ENCODE measurements at regions of chr7 and their contacts with region 1.

Region 1: DNA sequence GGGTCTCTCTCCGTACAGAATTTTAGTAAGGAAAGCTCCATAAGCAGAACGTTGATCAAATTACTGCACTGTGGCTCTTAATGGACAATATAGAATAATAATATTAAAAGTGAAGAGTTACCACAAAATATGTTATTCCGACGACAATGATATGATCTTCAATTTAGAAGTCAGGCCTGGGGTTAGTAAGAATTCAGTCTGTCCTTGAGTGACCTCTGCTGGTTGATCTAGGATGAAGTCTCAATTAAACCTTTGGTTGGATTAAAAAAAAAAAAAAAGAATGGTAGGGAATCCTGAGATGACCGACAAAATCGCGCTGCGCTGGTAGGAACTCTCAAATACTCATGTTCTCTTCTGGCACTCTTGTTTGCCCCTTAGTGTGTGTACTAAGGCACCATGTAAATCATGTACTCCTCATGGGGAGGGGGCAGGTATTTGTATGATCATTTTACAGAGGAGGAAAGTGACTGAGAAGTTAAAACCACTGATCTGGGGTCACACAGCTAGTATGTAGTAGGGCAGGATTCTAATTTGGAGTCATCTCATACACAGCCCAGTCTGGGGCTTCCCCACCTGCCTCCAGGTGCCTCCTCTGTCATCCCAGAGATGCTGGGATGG is 161.3 kb upstream of the NPVF start:
- DNase-seq: no peak
- ATAC-seq: no peak

Region 2: GRCh38 chr7:25259587-25260243 is 129.9 kb before region 1 on chr7:
- intact Hi-C with region 1: loop called (anchors 2 kb)
- DNase-seq: peak; percentile 46
- ATAC-seq: peak; percentile 79

Region 3: DNA sequence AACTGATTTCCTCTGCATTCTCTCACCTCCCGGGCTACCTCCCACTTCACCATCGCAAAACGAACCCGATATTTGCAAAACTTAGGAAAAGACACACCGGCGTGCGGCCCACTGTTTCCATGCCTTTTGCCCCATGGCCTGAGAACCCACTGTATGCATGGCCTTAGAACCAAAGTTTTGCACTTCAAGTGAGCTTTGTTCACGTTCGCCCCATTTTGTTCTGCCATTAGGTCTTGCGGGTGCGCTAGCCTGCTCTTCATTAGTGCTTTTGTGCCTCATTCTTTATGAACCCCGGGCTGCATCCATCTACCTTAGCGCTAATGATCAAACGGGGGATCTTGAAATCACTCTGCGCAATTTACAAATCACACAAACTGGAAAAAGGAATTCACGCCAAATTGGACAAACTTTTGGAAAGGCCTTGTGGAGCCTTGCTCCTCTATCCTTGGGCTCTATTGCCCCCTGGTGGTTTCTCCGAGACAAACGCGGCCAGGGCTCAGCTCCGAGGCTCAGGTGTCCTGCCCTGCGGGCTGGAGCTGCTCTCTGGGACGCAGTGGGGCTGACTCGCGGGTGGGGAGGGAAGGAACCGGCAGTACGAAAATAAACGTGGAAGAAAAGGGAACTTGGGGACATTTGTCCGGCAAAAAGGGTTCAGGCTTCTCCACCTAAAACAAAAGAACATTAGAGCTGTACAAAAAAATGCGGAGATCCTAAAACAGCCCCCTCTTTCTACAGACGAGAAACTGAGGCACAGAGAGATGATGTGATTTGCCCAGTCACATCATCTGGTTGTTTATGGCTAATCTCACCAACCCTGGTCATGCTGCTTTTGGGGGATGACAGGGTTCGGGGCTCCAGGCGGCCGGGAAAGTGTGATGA is 462.0 kb after region 1 on chr7:
- intact Hi-C with region 1: loop called (anchors 5 kb)
- DNase-seq: peak; percentile 85
- ATAC-seq: peak; percentile 74

Measured in left ventricle myocardium superior (tissue), 1 donor.